CD8-positive, alpha-beta T cell (primary cell): ENCODE measurements at regions of chr2 and their contacts with region 1.

Region 1: DNA sequence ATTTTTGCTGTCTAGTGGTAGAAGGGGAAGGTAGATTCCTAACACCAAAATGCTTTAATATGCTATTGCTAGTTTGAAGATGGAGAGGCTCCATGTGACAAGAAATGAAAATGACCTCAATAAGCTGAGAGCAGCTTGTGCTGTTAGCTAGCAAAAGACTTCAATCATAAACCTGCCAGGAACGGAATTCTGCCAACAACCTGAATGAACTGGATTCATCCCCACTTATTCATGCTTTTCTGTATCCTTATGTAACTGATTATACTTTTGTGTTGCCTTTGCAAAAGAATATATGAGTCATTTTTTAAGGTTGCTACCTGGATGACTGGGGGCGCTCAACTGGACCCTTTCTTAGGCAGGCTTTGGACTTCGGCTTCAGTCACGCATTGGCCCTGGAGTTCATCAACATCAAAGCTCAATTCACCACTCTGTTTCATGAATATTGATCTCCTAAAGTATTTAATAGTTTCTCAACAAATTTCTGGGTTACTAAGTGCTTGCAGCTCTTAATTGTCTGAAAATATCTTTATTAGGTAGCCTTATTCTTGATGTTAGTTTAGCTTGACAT is 97.5 kb upstream of the KCNJ3 start:
- DNase-seq: no peak
- ATAC-seq: no peak
- H3K4me3 ChIP-seq: no peak overlapping the region
- H3K4me3 Mint-ChIP-seq: no peak overlapping the region
- H3K27ac ChIP-seq: no peak overlapping the region
- H3K27ac Mint-ChIP-seq: no peak overlapping the region
- H3K4me1 ChIP-seq: no peaks in the 10 kb centered on the region
- H3K4me1 Mint-ChIP-seq: no peaks in the 10 kb centered on the region
- H3K27me3 ChIP-seq: no peaks in the 10 kb centered on the region
- H3K27me3 Mint-ChIP-seq: no peaks in the 10 kb centered on the region
- CTCF ChIP-seq: no peak

Region 2: GRCh38 chr2:154329510-154329909 is 271.5 kb before region 1 on chr2:
- CTCF ChIA-PET with region 1: no interaction called
- POLR2A ChIA-PET with region 1: no interaction called
- intact Hi-C with region 1: loop called in 1 of 2 experiments (anchors 5 kb)
- DNase-seq: no peak
- ATAC-seq: no peak
- H3K4me3 ChIP-seq: no peak overlapping the region
- H3K4me3 Mint-ChIP-seq: no peak overlapping the region
- H3K27ac ChIP-seq: no peak overlapping the region
- H3K27ac Mint-ChIP-seq: no peak overlapping the region
- H3K4me1 ChIP-seq: no peaks in the 10 kb centered on the region
- H3K4me1 Mint-ChIP-seq: no peaks in the 10 kb centered on the region
- H3K27me3 ChIP-seq: no peaks in the 10 kb centered on the region
- H3K27me3 Mint-ChIP-seq: no peaks in the 10 kb centered on the region
- CTCF ChIP-seq: no peak